PC-3 (cell line): ENCODE measurements at regions of chr6 and their contacts with region 1.

Region 1: GRCh38 chr6:116060572-116061283 is at the start of gene FRK:
- DNase-seq: peak; percentile 64
- ATAC-seq: peak; percentile 86
- H3K4me3 ChIP-seq: peak within 1 kb of the TSS; percentile 68
- H3K27ac ChIP-seq: peak within 1 kb of the TSS; percentile 46
- H3K4me1 ChIP-seq: peaks cover 8% of the 10 kb centered on the region; the same call in 1 of the 2 replicates
- H3K27me3 ChIP-seq: no peaks in the 10 kb centered on the region
- CTCF ChIP-seq: peak; percentile 55
- total RNA-seq, gene FRK: 0.46 and 0.66 TPM in 2 replicates

Region 2: GRCh38 chr6:116010790-116011401 is 49.8 kb before region 1 on chr6:
- CTCF ChIA-PET with region 1: interaction called, 6 read pairs
- POLR2A ChIA-PET with region 1: no interaction called
- intact Hi-C with region 1: loop called (anchors 2 kb)
- DNase-seq: peak; percentile 80
- ATAC-seq: peak; percentile 48
- H3K4me3 ChIP-seq: no peak overlapping the region; the same call in 1 of the 2 replicates
- H3K27ac ChIP-seq: peak overlapping the region; percentile 47
- H3K4me1 ChIP-seq: peaks cover 43% of the 10 kb centered on the region
- H3K27me3 ChIP-seq: no peaks in the 10 kb centered on the region
- CTCF ChIP-seq: peak; percentile 79